Caco-2 (cell line): ENCODE measurements at regions of chr1 and their contacts with region 1.

Region 1: GRCh38 chr1:54052934-54053744 is at the starts of genes TCEANC2 and TMEM59:
- DNase-seq: peak; percentile 95 to 97
- H3K4me3 ChIP-seq: peak within 1 kb of the TSS; percentile 82
- H3K4me3 Mint-ChIP-seq: no peak within 1 kb of the TSS
- H3K27ac Mint-ChIP-seq: no peak within 1 kb of the TSS
- H3K4me1 ChIP-seq: no peaks in the 10 kb centered on the region
- H3K4me1 Mint-ChIP-seq: no peaks in the 10 kb centered on the region
- H3K27me3 ChIP-seq: no peaks in the 10 kb centered on the region
- H3K27me3 Mint-ChIP-seq: no peaks in the 10 kb centered on the region
- CTCF ChIP-seq: no peak
- total RNA-seq, gene TCEANC2: 1.9 and 3.2 TPM in 2 replicates
- total RNA-seq, gene TMEM59: 116 TPM in 2 replicates

Region 2: GRCh38 chr1:53837924-53838652 is 215.1 kb before region 1 on chr1 and contains the start of gene NDC1:
- CTCF ChIA-PET with region 1: no interaction called
- POLR2A ChIA-PET with region 1: no interaction called
- intact Hi-C with region 1: loop called (anchors 1 kb)
- DNase-seq: peak; percentile 91 to 94
- H3K4me3 ChIP-seq: peak within 1 kb of the TSS; percentile 80
- H3K4me3 Mint-ChIP-seq: peak within 1 kb of the TSS; percentile 100
- H3K27ac Mint-ChIP-seq: peak within 1 kb of the TSS; percentile 94
- H3K4me1 ChIP-seq: no peaks in the 10 kb centered on the region
- H3K4me1 Mint-ChIP-seq: no peaks in the 10 kb centered on the region
- H3K27me3 ChIP-seq: no peaks in the 10 kb centered on the region
- H3K27me3 Mint-ChIP-seq: no peaks in the 10 kb centered on the region
- CTCF ChIP-seq: peak in 1 of 2 experiments; percentile 18
- total RNA-seq, gene NDC1: 28.8 and 29.6 TPM in 2 replicates

Region 3: GRCh38 chr1:53878492-53879105 is 174.5 kb before region 1 on chr1:
- CTCF ChIA-PET with region 1: no interaction called
- POLR2A ChIA-PET with region 1: no interaction called
- intact Hi-C with region 1: no loop called
- DNase-seq: peak in 1 of 2 experiments; percentile 49
- H3K4me3 ChIP-seq: no peak overlapping the region
- H3K4me3 Mint-ChIP-seq: no peak overlapping the region
- H3K27ac Mint-ChIP-seq: no peak overlapping the region
- H3K4me1 ChIP-seq: no peaks in the 10 kb centered on the region
- H3K4me1 Mint-ChIP-seq: no peaks in the 10 kb centered on the region
- H3K27me3 ChIP-seq: no peaks in the 10 kb centered on the region
- H3K27me3 Mint-ChIP-seq: no peaks in the 10 kb centered on the region
- CTCF ChIP-seq: peak; percentile 41 to 44

Region 4: GRCh38 chr1:54028306-54029251 is 24.6 kb before region 1 on chr1:
- CTCF ChIA-PET with region 1: no interaction called
- POLR2A ChIA-PET with region 1: no interaction called
- intact Hi-C with region 1: loop called (anchors 2 kb)
- DNase-seq: no peak
- H3K4me3 ChIP-seq: no peak overlapping the region
- H3K4me3 Mint-ChIP-seq: no peak overlapping the region
- H3K27ac Mint-ChIP-seq: peak overlapping the region; percentile 13
- H3K4me1 ChIP-seq: peaks cover 17% of the 10 kb centered on the region
- H3K4me1 Mint-ChIP-seq: peaks cover 24% of the 10 kb centered on the region
- H3K27me3 ChIP-seq: no peaks in the 10 kb centered on the region
- H3K27me3 Mint-ChIP-seq: no peaks in the 10 kb centered on the region
- CTCF ChIP-seq: no peak

Region 5: DNA sequence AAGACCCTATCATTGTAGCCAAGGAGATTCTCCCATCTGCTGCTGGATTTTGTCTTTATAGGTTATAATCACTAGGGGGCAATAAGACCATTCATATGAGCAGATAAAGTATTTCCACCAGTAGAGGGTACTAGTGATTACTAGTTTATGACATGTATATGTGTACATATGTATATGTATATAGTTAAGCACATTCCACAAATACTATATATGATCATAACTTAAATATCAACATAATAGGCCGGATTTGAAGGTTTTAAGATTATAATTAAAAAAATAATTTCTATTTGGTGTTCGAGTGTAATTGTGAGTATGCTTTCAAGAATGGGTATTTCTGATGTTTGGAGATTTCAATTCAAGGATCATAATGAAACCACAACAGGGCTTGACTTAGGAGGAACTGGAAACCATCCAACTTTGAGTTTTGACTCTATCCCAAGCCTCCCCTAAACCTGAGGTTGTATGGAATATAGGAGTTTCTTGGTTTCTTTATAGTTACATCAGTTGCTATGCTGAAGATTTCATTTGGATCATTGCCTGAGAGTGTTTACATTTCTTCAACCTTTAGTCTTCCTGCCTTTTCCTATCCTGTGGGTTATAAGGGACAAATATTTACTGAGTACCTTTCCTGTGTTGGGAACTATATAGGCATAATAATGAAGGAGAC is 17.2 kb after region 1 on chr1:
- CTCF ChIA-PET with region 1: no interaction called
- POLR2A ChIA-PET with region 1: no interaction called
- intact Hi-C with region 1: no loop called
- DNase-seq: peak in 1 of 2 experiments; percentile 15
- H3K4me3 ChIP-seq: no peak overlapping the region
- H3K4me3 Mint-ChIP-seq: no peak overlapping the region
- H3K27ac Mint-ChIP-seq: no peak overlapping the region
- H3K4me1 ChIP-seq: no peaks in the 10 kb centered on the region
- H3K4me1 Mint-ChIP-seq: peaks cover 7% of the 10 kb centered on the region
- H3K27me3 ChIP-seq: no peaks in the 10 kb centered on the region
- H3K27me3 Mint-ChIP-seq: no peaks in the 10 kb centered on the region
- CTCF ChIP-seq: peak in 1 of 2 experiments; percentile 72